AG04450 (cell line): ENCODE measurements at regions of chr6 and their contacts with region 1.

Region 1: GRCh38 chr6:157086632-157087031 is 236.7 kb downstream of the TMEM242 start:
- DNase-seq: no peak
- H3K4me3 ChIP-seq: no peak overlapping the region
- H3K27ac ChIP-seq: no peak overlapping the region
- H3K27me3 ChIP-seq: no peaks in the 10 kb centered on the region
- CTCF ChIP-seq: no peak

Region 2: DNA sequence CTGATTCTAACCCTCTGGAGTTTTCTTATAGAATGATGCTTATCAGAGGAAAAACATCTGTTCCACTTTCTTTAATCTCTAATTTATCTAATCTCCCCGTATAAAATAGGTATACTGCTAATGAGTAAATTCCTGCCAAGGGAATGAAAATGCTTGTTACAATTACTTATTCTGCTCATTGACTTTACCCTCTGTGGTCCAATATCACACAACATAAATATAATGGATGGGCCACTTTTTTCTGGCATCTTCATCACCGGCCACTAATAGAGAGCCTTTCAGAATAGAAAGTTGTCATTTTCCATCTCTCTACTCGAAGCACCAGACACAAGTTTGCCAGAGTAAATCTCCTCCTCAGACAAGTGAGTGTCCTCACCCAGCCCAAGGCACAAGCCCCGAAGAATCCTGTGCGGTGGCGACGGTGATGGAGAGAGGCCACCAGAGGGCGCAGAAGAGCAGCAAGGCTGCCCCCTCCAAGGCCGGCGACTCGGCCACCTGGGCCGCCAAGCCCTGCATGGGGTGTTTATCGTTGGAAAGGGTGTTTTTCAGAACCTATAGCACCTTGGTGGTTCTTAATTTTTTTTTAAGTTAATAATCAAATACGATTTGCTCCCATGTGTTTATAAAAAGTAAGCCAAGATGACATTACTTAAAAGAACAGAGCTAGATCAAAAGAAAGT is 522.4 kb before region 1 on chr6:
- CTCF ChIA-PET with region 1: no interaction called
- POLR2A ChIA-PET with region 1: no interaction called
- DNase-seq: peak; percentile 30
- H3K4me3 ChIP-seq: no peak overlapping the region
- H3K27ac ChIP-seq: no peak overlapping the region
- H3K27me3 ChIP-seq: no peaks in the 10 kb centered on the region
- CTCF ChIP-seq: peak; percentile 96

Region 3: GRCh38 chr6:157099912-157100593 is 13.4 kb after region 1 on chr6:
- CTCF ChIA-PET with region 1: interaction called, 11 read pairs
- POLR2A ChIA-PET with region 1: no interaction called
- DNase-seq: no peak
- H3K4me3 ChIP-seq: no peak overlapping the region
- H3K27ac ChIP-seq: no peak overlapping the region
- H3K27me3 ChIP-seq: no peaks in the 10 kb centered on the region
- CTCF ChIP-seq: no peak